ENCODE measurements at regions of chr11 and their contacts with region 1.

Region 1: DNA sequence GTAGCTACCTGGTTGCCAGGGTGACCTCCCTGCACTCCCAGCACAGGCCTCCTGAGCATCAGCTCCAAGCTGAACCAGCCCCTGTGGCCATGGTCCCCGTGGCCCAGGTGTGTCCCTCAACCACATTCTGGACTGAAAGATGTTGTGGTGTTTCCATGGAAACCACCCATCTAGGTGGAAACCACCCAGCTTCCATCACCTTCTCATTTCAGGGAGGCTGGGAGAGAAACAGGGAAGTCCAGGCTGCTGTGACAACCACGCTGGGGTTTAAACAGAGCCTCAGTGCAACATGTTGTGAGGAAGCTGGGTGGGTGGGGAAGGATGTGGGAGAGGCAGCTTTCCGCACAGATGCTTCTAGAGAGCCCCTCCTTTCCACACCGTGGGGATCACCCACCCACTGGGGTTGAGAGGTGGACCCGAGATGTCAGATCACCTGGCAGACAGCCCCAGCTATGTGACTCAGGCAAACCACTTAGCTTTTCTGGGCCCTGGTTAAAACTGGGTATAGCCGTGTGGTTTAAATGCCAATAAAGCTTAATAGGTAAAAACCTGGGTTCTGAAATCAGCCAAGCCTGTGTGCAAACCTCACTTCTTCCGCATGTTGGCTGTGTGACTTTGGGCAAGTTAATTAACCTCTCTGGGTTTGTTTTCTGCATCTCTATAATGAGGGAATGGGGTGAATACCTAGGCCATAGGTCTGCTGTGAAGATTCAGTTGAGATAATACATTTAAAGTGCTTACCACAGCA is 46.4 kb downstream of the CD82 start:
- DNase-seq: peak; percentile 19 to 89 (median 62)
- ATAC-seq: peak; percentile 83
- H3K4me3 ChIP-seq: no peak overlapping the region
- H3K4me3 Mint-ChIP-seq: peak overlapping the region; percentile 11
- H3K27ac ChIP-seq: peak overlapping the region; percentile 49 to 66
- H3K27ac Mint-ChIP-seq: peak overlapping the region; percentile 82
- H3K4me1 ChIP-seq: peaks cover 97% of the 10 kb centered on the region
- H3K4me1 Mint-ChIP-seq: peaks cover 84% of the 10 kb centered on the region
- H3K27me3 ChIP-seq: no peaks in the 10 kb centered on the region
- H3K27me3 Mint-ChIP-seq: no peaks in the 10 kb centered on the region
- CTCF ChIP-seq: no peak

Region 2: DNA sequence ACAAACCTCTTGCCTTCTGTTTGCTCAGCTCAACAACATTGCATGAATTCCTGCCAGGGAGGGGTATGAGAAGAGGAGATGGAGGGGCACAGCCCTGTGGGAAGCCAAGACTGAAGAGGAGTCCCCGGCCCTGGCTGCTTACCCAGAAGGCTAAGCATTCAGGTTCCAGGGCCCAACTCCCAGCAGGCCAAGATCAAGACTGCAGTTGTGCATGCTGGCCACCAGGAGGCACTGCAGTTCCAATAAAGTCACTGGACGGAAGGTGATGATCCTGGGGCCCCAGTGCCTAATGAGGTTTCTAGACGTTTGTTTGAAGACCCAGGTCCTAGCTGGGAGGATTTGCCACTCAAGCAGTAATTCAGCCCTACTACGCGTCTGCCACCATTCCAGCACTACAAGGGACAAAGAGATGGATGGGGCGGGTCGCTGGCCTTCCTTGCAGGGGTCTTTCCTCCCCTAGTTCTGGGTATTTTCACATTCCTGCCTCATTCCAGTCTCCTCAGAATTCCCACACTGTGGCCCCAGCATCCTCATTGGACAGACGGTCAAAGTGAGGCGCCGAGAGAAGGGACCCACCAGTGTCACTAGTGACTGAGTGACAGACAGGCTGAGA is 325.5 kb before region 1 on chr11:
- CTCF ChIA-PET with region 1: no interaction called
- POLR2A ChIA-PET with region 1: no interaction called
- intact Hi-C with region 1: loop called in 1 of 2 experiments (anchors 10 kb)
- DNase-seq: peak; percentile 27 to 74 (median 41)
- ATAC-seq: peak; percentile 41
- H3K4me3 ChIP-seq: no peak overlapping the region
- H3K4me3 Mint-ChIP-seq: no peak overlapping the region
- H3K27ac ChIP-seq: no peak overlapping the region
- H3K27ac Mint-ChIP-seq: no peak overlapping the region
- H3K4me1 ChIP-seq: no peaks in the 10 kb centered on the region
- H3K4me1 Mint-ChIP-seq: no peaks in the 10 kb centered on the region
- H3K27me3 ChIP-seq: no peaks in the 10 kb centered on the region
- H3K27me3 Mint-ChIP-seq: peaks cover 10% of the 10 kb centered on the region
- CTCF ChIP-seq: peak; percentile 93

Region 3: DNA sequence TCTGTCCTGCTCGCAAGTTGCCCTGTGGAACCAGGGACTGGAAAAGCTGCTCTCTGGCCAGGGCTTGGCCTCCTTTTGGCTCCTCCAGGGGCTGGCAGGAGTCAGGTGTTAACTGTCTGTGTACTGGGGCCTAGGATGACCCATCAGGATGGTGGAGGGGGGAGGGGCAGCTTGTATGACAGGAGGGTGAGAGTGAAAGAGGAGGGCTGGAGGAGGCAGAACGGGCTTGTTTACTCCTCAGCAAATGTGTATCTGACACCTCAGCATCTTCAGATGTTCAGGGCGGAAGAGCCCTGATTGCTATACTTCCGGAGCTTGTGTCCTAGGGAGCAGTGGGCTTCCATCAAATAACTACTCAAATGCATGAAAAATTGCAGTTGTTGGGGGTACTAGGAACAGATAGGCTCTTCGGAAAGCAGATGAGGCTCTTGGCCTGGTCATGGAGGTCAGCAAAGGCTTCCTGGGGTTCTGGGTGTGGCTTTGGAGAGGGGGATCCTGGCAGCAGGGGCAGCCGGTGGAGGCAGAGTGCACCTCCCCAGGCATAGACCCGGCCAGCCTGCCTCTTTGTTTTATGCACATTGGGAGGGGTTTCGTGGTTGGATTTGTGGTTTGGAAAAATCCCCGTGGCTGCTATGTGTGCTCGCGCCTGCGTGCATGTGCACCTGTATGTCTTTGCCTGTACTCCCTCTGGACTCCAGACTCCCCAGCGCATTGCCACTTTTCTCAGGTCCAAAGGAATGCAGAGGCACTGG is 15.2 kb before region 1 on chr11:
- CTCF ChIA-PET with region 1: interaction called, 8 read pairs
- POLR2A ChIA-PET with region 1: interaction called, 59 read pairs
- intact Hi-C with region 1: no loop called
- DNase-seq: peak; percentile 31 to 93 (median 58)
- ATAC-seq: peak; percentile 88
- H3K4me3 ChIP-seq: peak overlapping the region; percentile 30
- H3K4me3 Mint-ChIP-seq: peak overlapping the region; percentile 53
- H3K27ac ChIP-seq: peak overlapping the region; percentile 77 to 83
- H3K27ac Mint-ChIP-seq: peak overlapping the region; percentile 98
- H3K4me1 ChIP-seq: peaks cover 88% of the 10 kb centered on the region
- H3K4me1 Mint-ChIP-seq: peaks cover 84% of the 10 kb centered on the region
- H3K27me3 ChIP-seq: no peaks in the 10 kb centered on the region
- H3K27me3 Mint-ChIP-seq: no peaks in the 10 kb centered on the region
- CTCF ChIP-seq: no peak

Region 4: DNA sequence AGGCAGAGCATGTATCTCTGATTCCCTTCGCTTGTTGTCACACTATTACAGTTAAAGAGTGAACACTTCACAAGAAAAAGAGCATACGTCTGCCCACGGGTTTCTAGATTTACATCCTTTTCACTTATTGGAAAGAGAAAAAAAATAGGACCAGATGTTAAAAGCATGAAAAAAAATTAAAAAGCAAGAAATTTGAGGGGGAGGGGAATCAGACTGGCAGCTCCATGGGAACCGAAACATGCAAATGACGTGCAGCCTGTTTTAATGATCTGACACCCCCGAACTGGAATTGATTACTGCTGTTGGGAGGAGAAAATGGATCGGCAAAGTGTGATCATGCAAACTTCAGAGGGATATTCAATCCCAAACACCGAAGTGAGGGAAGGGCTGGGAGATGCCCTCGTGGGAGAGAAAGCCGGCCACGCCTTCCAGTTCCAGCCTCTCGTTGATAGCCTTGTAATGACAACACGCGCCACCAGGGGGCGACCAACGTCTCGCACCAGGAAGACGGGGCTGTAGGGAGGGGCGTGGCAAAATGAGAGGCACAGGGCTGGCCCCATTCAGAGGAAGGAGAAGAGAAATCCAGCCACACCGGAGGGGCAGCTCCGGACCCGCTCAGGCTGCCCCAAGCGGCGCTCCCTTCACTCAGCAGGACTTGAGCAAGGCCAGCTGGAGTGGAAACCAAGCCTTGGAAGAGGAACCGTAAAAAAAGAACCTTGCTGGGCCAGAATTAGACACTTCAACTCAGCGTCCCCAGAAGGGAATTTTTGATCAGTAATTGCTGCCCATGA is 728.1 kb after region 1 on chr11:
- CTCF ChIA-PET with region 1: no interaction called
- POLR2A ChIA-PET with region 1: no interaction called
- intact Hi-C with region 1: loop called in 1 of 2 experiments (anchors 10 kb)
- DNase-seq: peak; percentile 86 to 97 (median 90)
- ATAC-seq: peak; percentile 100
- H3K4me3 ChIP-seq: peak overlapping the region; percentile 33
- H3K4me3 Mint-ChIP-seq: peak overlapping the region; percentile 49
- H3K27ac ChIP-seq: no peak overlapping the region
- H3K27ac Mint-ChIP-seq: no peak overlapping the region
- H3K4me1 ChIP-seq: peaks cover 9% of the 10 kb centered on the region
- H3K4me1 Mint-ChIP-seq: peaks cover 11% of the 10 kb centered on the region
- H3K27me3 ChIP-seq: peaks cover 0 to 4% of the 10 kb centered on the region in 2 experiments
- H3K27me3 Mint-ChIP-seq: peaks cover 20% of the 10 kb centered on the region
- CTCF ChIP-seq: peak; percentile 99